ENCODE measurements at regions of chr6 and their contacts with region 1.

Region 1: DNA sequence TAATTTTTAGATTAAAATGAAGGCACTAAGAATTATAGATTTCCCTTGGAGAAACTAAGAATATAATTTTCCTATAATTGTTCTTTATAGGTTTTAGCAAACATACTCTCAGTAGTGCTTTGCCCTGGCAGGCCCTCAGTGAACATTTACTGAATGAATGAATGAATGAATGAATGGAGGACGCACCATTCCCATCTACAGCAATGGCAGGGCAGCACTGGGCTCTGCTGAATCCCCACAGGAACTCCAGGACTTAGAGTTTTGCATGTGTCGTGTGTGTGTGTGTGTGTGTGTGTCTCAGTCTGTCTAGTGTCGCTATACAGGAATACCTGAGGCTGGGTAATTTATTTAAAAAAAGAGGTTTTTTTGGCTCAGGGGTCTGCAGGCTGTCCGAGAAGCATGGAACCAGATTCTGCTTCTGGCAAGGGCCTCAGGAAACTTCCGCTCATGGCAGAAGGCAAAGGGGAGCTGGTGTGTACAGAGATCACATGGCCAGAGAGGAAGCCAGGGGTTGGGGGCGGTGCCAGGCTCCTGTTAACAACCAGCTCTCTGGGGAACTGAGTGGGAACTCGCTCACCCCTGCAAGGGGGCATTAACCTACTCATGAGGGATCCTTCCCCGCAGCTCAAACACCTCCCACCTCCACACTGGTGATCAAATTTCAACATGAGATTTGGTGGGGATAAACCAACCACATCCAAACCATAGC is 20.1 kb downstream of the RNASET2 start:
- DNase-seq: peak in 5 of 35 experiments; percentile 26 to 52 (median 30)
- ATAC-seq: peak; percentile 38 to 81 (median 72)
- H3K4me3 ChIP-seq: no peak overlapping the region
- H3K4me3 Mint-ChIP-seq: no peak overlapping the region
- H3K27ac ChIP-seq: no peak overlapping the region
- H3K27ac Mint-ChIP-seq: peak overlapping the region; percentile 78 to 82
- H3K4me1 ChIP-seq: peaks cover 5 to 33% of the 10 kb centered on the region in 2 experiments
- H3K4me1 Mint-ChIP-seq: peaks cover 14 to 64% (median 62%) of the 10 kb centered on the region in 3 donors
- H3K27me3 ChIP-seq: no peaks in the 10 kb centered on the region
- H3K27me3 Mint-ChIP-seq: no peaks in the 10 kb centered on the region

Region 2: GRCh38 chr6:166921570-166921969 is 14.7 kb before region 1 on chr6:
- CTCF ChIA-PET with region 1: interaction called in 1 of 2 experiments, 3 read pairs
- POLR2A ChIA-PET with region 1: interaction called in 1 of 2 experiments, 11 read pairs
- DNase-seq: no peak
- ATAC-seq: no peak
- H3K4me3 ChIP-seq: no peak overlapping the region
- H3K4me3 Mint-ChIP-seq: no peak overlapping the region
- H3K27ac ChIP-seq: no peak overlapping the region
- H3K27ac Mint-ChIP-seq: no peak overlapping the region
- H3K4me1 ChIP-seq: no peaks in the 10 kb centered on the region
- H3K4me1 Mint-ChIP-seq: peaks cover 0 to 4% (median 1%) of the 10 kb centered on the region in 3 donors
- H3K27me3 ChIP-seq: no peaks in the 10 kb centered on the region
- H3K27me3 Mint-ChIP-seq: no peaks in the 10 kb centered on the region

Region 3: GRCh38 chr6:166950443-166950821 is 14.2 kb after region 1 on chr6:
- CTCF ChIA-PET with region 1: interaction called, 4 to 13 read pairs
- POLR2A ChIA-PET with region 1: interaction called, 4 read pairs
- DNase-seq: peak in 1 of 35 experiments; percentile 49
- ATAC-seq: peak in 3 of 4 experiments; percentile 15 to 28 (median 17)
- H3K4me3 ChIP-seq: peak overlapping the region in 1 of 2 donors; percentile 39
- H3K4me3 Mint-ChIP-seq: peak overlapping the region; percentile 70 to 85 (median 77)
- H3K27ac ChIP-seq: peak overlapping the region; percentile 96
- H3K27ac Mint-ChIP-seq: peak overlapping the region; percentile 98 to 100
- H3K4me1 ChIP-seq: peaks cover 34 to 70% of the 10 kb centered on the region in 2 experiments
- H3K4me1 Mint-ChIP-seq: peaks cover 58 to 76% (median 61%) of the 10 kb centered on the region in 3 donors
- H3K27me3 ChIP-seq: no peaks in the 10 kb centered on the region
- H3K27me3 Mint-ChIP-seq: no peaks in the 10 kb centered on the region